ENCODE measurements at regions of chr12 and their contacts with region 1.

Region 1: GRCh38 chr12:32062881-32063280 is 43.8 kb upstream of the BICD1 start:
- DNase-seq: no peak
- H3K4me3 Mint-ChIP-seq: no peak overlapping the region
- H3K27ac Mint-ChIP-seq: no peak overlapping the region
- H3K4me1 Mint-ChIP-seq: peaks cover 2% of the 10 kb centered on the region
- H3K27me3 Mint-ChIP-seq: no peaks in the 10 kb centered on the region

Region 2: GRCh38 chr12:31650927-31651326 is 412.0 kb before region 1 on chr12:
- CTCF ChIA-PET with region 1: interaction called, 17 read pairs
- POLR2A ChIA-PET with region 1: no interaction called
- intact Hi-C with region 1: loop called (anchors 1 kb)
- DNase-seq: no peak
- H3K4me3 Mint-ChIP-seq: no peak overlapping the region
- H3K27ac Mint-ChIP-seq: no peak overlapping the region
- H3K4me1 Mint-ChIP-seq: peaks cover 11% of the 10 kb centered on the region
- H3K27me3 Mint-ChIP-seq: no peaks in the 10 kb centered on the region

Region 3: DNA sequence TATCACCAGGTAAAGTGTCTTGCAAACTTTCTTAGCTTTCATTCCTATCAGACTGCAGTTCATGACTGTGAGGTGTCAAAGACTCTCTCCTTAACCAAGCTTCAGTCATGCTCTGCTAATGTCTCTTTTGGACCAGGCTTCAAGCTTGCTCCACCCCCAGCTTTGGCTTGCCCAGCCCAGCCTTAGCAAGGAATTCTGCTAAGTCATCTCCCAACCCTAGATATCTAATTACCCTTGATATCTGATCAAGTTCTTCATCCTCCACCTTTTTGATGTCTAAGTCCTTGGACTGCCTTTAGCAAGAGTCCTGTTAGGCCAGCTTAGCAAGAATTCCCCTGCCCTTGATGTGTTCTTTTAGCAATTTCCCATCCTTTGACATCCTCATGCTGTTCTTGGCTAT is 227.5 kb after region 1 on chr12:
- CTCF ChIA-PET with region 1: no interaction called
- POLR2A ChIA-PET with region 1: no interaction called
- intact Hi-C with region 1: no loop called
- DNase-seq: no peak
- H3K4me3 Mint-ChIP-seq: no peak overlapping the region
- H3K27ac Mint-ChIP-seq: no peak overlapping the region
- H3K4me1 Mint-ChIP-seq: no peaks in the 10 kb centered on the region
- H3K27me3 Mint-ChIP-seq: no peaks in the 10 kb centered on the region

Region 4: GRCh38 chr12:32302218-32303173 is 239.6 kb after region 1 on chr12:
- CTCF ChIA-PET with region 1: interaction called, 8 read pairs
- POLR2A ChIA-PET with region 1: no interaction called
- intact Hi-C with region 1: loop called (anchors 1 kb)
- DNase-seq: no peak
- H3K4me3 Mint-ChIP-seq: no peak overlapping the region
- H3K27ac Mint-ChIP-seq: no peak overlapping the region
- H3K4me1 Mint-ChIP-seq: no peaks in the 10 kb centered on the region
- H3K27me3 Mint-ChIP-seq: no peaks in the 10 kb centered on the region

Region 5: GRCh38 chr12:32312049-32312670 is 249.3 kb after region 1 on chr12:
- CTCF ChIA-PET with region 1: interaction called, 14 read pairs
- POLR2A ChIA-PET with region 1: no interaction called
- intact Hi-C with region 1: loop called (anchors 1 kb)
- DNase-seq: no peak
- H3K4me3 Mint-ChIP-seq: no peak overlapping the region
- H3K27ac Mint-ChIP-seq: no peak overlapping the region
- H3K4me1 Mint-ChIP-seq: no peaks in the 10 kb centered on the region
- H3K27me3 Mint-ChIP-seq: no peaks in the 10 kb centered on the region

Measured in activated CD4-positive, alpha-beta memory T cell treated with anti-CD3 and anti-CD28 coated beads for 36 hours (primary cell).